Naive thymus-derived CD4-positive, alpha-beta T cell (primary cell): ENCODE measurements at regions of chr3 and their contacts with region 1.

Region 1: GRCh38 chr3:123489400-123490004 is 40.6 kb upstream of the ADCY5 start:
- DNase-seq: peak in 5 of 9 donors; percentile 4 to 46 (median 11)
- ATAC-seq: peak; percentile 52
- H3K4me3 ChIP-seq: no peak overlapping the region
- H3K4me3 Mint-ChIP-seq: no peak overlapping the region
- H3K27ac ChIP-seq: no peak overlapping the region
- H3K27ac Mint-ChIP-seq: peak overlapping the region in 2 of 9 donors; percentile 2 to 29
- H3K4me1 ChIP-seq: peaks cover 0 to 11% of the 10 kb centered on the region in 2 donors
- H3K4me1 Mint-ChIP-seq: peaks cover 0 to 2% (median 0%) of the 10 kb centered on the region in 7 donors
- H3K27me3 ChIP-seq: no peaks in the 10 kb centered on the region
- H3K27me3 Mint-ChIP-seq: peaks cover 0 to 5% (median 0%) of the 10 kb centered on the region in 5 donors

Region 2: GRCh38 chr3:123328851-123329635 is 160.5 kb before region 1 on chr3:
- CTCF ChIA-PET with region 1: no interaction called
- POLR2A ChIA-PET with region 1: no interaction called
- intact Hi-C with region 1: loop called (anchors 1 to 2 kb)
- DNase-seq: peak; percentile 26 to 78 (median 63)
- ATAC-seq: peak; percentile 77
- H3K4me3 ChIP-seq: no peak overlapping the region
- H3K4me3 Mint-ChIP-seq: no peak overlapping the region
- H3K27ac ChIP-seq: no peak overlapping the region
- H3K27ac Mint-ChIP-seq: no peak overlapping the region
- H3K4me1 ChIP-seq: no peaks in the 10 kb centered on the region
- H3K4me1 Mint-ChIP-seq: peaks cover 0 to 5% (median 0%) of the 10 kb centered on the region in 7 donors
- H3K27me3 ChIP-seq: no peaks in the 10 kb centered on the region
- H3K27me3 Mint-ChIP-seq: peaks cover 0 to 10% (median 0%) of the 10 kb centered on the region in 5 donors

Region 3: DNA sequence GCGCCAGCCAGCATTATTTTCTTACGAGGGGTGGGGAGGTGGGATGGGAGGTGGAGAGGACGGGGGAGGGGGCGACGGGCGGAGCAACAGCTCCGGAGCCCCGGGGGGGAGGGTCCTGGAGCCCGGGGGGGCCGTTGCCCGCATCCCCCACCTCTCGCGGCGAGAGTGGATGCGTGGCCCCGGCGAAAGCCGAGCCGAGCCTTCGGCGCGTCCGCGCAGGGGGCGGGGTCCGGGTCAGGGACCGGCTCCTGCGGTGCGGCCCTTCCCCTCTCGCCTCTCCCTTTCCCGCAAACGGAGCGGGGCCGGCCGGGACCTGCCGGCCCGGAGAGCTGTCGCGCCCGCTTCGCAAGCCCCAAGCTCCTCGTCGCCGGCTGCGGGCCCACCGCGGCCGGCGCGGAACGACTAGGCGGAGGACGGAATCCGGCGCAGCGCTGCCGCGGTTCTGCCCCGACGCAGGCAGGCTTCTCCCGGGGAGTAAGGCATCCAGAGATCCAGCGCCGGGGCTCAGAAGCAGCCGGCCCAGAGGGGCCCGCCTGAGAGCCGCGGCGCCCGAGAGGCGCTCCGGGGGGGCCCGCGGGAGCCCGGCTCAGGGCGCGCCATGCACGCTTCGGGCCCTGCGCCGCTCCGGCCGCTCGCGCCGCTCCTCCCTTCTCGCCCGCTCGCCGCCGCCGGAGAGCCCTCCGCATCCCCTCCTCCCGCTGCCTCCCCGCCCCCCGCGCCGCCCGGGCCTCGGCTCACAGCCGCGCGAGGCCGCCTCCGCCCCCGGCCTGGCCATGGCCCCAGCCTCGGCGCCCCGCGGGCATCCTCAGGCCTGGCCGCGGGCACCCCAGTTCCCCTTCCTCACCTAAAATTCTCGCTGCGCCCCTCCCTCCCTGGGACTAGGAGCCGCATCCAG is 40.2 kb before region 1 on chr3:
- CTCF ChIA-PET with region 1: no interaction called
- POLR2A ChIA-PET with region 1: no interaction called
- intact Hi-C with region 1: loop called in 1 of 2 experiments (anchors 1 kb)
- DNase-seq: peak in 3 of 9 donors; percentile 5 to 27 (median 7)
- ATAC-seq: peak; percentile 6
- H3K4me3 ChIP-seq: no peak overlapping the region
- H3K4me3 Mint-ChIP-seq: peak overlapping the region in 4 of 10 donors; percentile 8 to 71 (median 61)
- H3K27ac ChIP-seq: no peak overlapping the region
- H3K27ac Mint-ChIP-seq: no peak overlapping the region
- H3K4me1 ChIP-seq: no peaks in the 10 kb centered on the region
- H3K4me1 Mint-ChIP-seq: peaks cover 0 to 17% (median 5%) of the 10 kb centered on the region in 7 donors
- H3K27me3 ChIP-seq: no peaks in the 10 kb centered on the region
- H3K27me3 Mint-ChIP-seq: peaks cover 51 to 66% (median 55%) of the 10 kb centered on the region in 5 donors